CD8-positive, alpha-beta T cell (primary cell): ENCODE measurements at regions of chr18 and their contacts with region 1.

Region 1: DNA sequence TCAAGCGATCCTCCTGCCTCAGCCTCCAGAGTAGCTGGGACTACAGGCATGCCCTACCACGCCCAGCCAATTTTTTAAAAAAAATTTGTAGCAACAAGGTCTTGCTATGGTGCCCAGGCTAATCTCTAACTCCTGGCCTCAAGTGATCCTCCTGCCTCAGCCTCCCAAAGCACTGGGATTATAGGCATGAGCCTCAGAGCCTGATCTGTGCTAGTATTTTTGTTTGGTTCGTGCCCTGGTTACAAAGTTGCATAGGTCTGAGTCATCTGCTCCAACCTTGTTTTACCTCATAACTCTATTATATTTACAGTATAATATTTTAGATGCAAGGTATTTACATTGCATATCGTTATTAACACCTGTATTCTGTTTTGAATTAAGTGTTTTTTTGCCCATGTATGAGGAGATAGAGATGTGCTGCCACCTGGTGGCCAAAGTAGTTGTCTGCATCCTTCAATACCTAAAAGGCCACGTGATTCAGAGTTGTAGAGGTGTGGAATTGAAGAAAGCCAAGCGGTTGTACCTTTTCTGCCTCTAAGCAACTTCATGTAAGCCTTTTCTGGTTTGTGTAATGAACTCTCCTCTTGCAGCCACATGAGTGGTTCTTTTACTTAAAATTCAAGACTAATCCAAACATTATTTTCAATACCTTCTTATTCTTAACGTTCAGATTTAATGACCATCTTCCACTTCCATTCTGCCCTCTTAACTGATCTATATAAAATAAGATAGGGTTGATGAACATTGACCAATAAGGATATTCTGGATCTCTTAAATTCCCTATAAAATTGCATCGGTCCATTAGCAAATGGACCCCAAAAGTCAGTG is 19.9 kb upstream of the CABYR start:
- DNase-seq: peak; percentile 55 to 89 (median 79)
- ATAC-seq: peak; percentile 90
- H3K4me3 ChIP-seq: no peak overlapping the region
- H3K4me3 Mint-ChIP-seq: no peak overlapping the region
- H3K27ac ChIP-seq: no peak overlapping the region
- H3K27ac Mint-ChIP-seq: no peak overlapping the region
- H3K4me1 ChIP-seq: peaks cover 10% of the 10 kb centered on the region
- H3K4me1 Mint-ChIP-seq: peaks cover 23% of the 10 kb centered on the region
- H3K27me3 ChIP-seq: no peaks in the 10 kb centered on the region
- H3K27me3 Mint-ChIP-seq: no peaks in the 10 kb centered on the region
- CTCF ChIP-seq: peak; percentile 77

Region 2: GRCh38 chr18:23619388-23619881 is 499.5 kb before region 1 on chr18:
- CTCF ChIA-PET with region 1: interaction called, 4 read pairs
- POLR2A ChIA-PET with region 1: no interaction called
- intact Hi-C with region 1: loop called (anchors 1 kb)
- DNase-seq: peak in 2 of 9 experiments; percentile 27 to 47
- ATAC-seq: peak; percentile 36
- H3K4me3 ChIP-seq: peak overlapping the region; percentile 19 to 26
- H3K4me3 Mint-ChIP-seq: peak overlapping the region; percentile 72
- H3K27ac ChIP-seq: no peak overlapping the region
- H3K27ac Mint-ChIP-seq: no peak overlapping the region
- H3K4me1 ChIP-seq: no peaks in the 10 kb centered on the region
- H3K4me1 Mint-ChIP-seq: peaks cover 11% of the 10 kb centered on the region
- H3K27me3 ChIP-seq: peaks cover 11 to 15% of the 10 kb centered on the region in 2 experiments
- H3K27me3 Mint-ChIP-seq: peaks cover 39% of the 10 kb centered on the region
- CTCF ChIP-seq: no peak

Region 3: GRCh38 chr18:23828426-23828825 is 290.5 kb before region 1 on chr18:
- CTCF ChIA-PET with region 1: interaction called, 4 read pairs
- POLR2A ChIA-PET with region 1: no interaction called
- intact Hi-C with region 1: loop called in 1 of 2 experiments (anchors 5 kb)
- DNase-seq: peak in 8 of 9 experiments; percentile 25 to 91 (median 52)
- ATAC-seq: peak; percentile 98
- H3K4me3 ChIP-seq: no peak overlapping the region
- H3K4me3 Mint-ChIP-seq: no peak overlapping the region
- H3K27ac ChIP-seq: peak overlapping the region; percentile 32 to 73
- H3K27ac Mint-ChIP-seq: peak overlapping the region; percentile 56
- H3K4me1 ChIP-seq: peaks cover 12% of the 10 kb centered on the region
- H3K4me1 Mint-ChIP-seq: peaks cover 17% of the 10 kb centered on the region
- H3K27me3 ChIP-seq: no peaks in the 10 kb centered on the region
- H3K27me3 Mint-ChIP-seq: peaks cover under 1% of the 10 kb centered on the region
- CTCF ChIP-seq: no peak

Region 4: DNA sequence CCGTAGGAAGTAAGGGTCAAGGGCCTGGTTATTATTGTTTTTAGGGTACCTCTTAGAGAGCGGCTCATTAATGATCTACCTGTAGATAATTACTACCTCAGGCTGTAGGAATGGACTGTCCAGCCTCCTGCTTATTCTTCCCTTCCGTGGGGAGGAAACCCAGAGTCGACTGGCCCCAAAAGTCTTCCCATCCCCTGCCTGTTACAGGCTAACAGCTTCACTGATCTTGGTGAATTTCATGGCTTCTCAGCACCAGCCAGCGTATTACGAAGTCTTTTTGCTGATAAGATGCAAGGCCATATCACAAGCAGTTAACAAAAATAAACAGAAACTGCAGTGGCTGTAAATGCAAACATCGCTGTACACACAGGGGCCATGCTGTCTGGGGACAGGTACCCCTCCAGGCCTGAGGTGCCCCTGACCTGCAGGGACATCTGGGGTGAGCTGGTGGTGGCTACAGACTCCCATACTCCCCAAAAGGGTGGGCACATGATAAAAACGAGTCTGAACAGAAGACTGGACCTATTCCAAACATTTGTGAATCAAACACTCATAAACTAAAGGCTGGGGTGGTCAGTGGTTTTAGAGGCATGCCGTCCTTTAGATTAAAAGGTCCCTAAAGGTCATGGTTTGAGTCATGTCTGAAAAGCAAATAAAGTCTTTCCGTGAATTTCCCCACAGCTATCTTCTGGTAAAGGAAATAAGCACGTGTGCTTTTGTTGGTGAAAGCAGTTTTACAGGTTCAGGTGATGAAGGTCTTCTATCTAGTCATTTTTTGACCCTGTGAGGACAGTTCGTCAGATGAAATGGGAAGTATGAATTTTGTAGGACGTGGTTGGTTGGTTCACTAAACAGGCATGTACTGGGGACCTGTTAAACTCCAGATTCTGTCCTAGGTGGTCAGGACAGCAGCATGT is 67.7 kb before region 1 on chr18:
- CTCF ChIA-PET with region 1: no interaction called
- POLR2A ChIA-PET with region 1: interaction called, 3 read pairs
- intact Hi-C with region 1: loop called in 1 of 2 experiments (anchors 10 kb)
- DNase-seq: no peak
- ATAC-seq: no peak
- H3K4me3 ChIP-seq: no peak overlapping the region
- H3K4me3 Mint-ChIP-seq: peak overlapping the region; percentile 8
- H3K27ac ChIP-seq: no peak overlapping the region
- H3K27ac Mint-ChIP-seq: peak overlapping the region; percentile 67
- H3K4me1 ChIP-seq: peaks cover 63% of the 10 kb centered on the region
- H3K4me1 Mint-ChIP-seq: peaks cover 84% of the 10 kb centered on the region
- H3K27me3 ChIP-seq: no peaks in the 10 kb centered on the region
- H3K27me3 Mint-ChIP-seq: no peaks in the 10 kb centered on the region
- CTCF ChIP-seq: no peak